Activated CD4-positive, alpha-beta T cell treated with anti-CD3 and anti-CD28 coated beads for 36 hours (primary cell): ENCODE measurements at regions of chr7 and their contacts with region 1.

Region 1: DNA sequence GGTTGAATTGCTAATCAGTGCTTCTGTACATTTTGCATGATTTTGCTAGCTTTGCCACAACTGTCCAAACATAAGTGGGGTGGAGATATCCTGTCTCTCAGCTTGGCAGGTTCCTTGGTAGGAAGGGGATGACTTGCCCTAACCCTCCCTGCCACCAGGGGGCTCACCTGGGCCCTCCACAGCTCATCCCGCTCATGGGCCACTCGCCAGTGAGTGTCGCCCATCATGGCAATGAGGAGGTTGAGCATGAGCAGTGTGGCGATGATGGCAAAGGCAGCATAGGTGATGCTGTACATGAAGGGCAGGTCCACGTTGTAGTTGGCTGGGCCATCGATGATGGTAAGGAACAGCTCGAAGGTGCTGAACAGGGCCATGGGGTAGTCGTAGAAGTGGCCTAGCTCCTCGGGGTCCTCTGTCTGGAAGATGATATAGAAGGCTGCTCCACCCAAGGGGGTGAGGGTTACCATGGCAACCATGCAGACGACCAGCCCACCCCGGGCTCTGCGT is 12.2 kb downstream of the TRPV6 start:
- DNase-seq: peak; percentile 68
- ATAC-seq: peak; percentile 77
- H3K4me3 Mint-ChIP-seq: no peak overlapping the region
- H3K27ac Mint-ChIP-seq: no peak overlapping the region
- H3K4me1 Mint-ChIP-seq: no peaks in the 10 kb centered on the region
- H3K27me3 Mint-ChIP-seq: no peaks in the 10 kb centered on the region

Region 2: GRCh38 chr7:142886477-142887265 is 13.3 kb after region 1 on chr7:
- CTCF ChIA-PET with region 1: interaction called, 15 read pairs
- POLR2A ChIA-PET with region 1: no interaction called
- intact Hi-C with region 1: loop called in 1 of 2 experiments (anchors 1 kb)
- DNase-seq: no peak
- ATAC-seq: no peak
- H3K4me3 Mint-ChIP-seq: no peak overlapping the region
- H3K27ac Mint-ChIP-seq: no peak overlapping the region
- H3K4me1 Mint-ChIP-seq: no peaks in the 10 kb centered on the region
- H3K27me3 Mint-ChIP-seq: peaks cover 4% of the 10 kb centered on the region

Region 3: DNA sequence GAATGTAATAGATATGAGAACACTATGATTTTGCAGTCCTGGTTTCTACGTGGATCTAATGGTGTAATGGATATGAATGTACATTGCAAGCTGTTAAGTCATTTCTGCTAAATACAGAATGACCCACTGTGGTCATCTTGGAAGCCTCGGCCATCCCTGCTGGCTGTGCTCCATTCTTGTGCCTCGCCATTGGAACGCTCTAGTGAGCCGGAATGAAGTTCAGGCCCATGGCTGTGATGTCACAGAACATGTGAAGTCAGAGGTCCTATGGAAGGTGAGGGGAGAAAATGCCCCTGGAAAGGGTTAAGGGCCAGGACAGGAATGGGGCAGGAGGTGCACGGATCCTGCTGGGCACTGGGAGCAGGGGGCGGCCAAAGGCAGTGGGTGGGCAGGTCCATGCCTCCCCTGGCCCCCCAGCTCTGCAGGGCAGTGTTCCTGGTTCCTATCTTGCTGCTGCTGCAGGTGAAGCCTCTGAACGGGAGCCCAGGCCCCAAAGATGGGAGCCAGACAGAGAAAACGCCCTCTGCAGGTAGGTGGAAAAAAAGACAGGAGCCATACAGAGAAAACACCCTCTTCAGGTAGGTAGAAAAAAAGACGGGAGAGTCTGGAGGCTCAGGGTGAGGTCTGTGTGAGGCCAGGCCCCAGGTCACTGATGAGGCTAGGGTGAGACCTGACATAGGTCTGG is 66.0 kb after region 1 on chr7 and contains the start of gene LLCFC1:
- CTCF ChIA-PET with region 1: no interaction called
- POLR2A ChIA-PET with region 1: no interaction called
- intact Hi-C with region 1: no loop called
- DNase-seq: peak; percentile 24
- ATAC-seq: peak; percentile 30
- H3K4me3 Mint-ChIP-seq: no peak within 1 kb of the TSS
- H3K27ac Mint-ChIP-seq: no peak within 1 kb of the TSS
- H3K4me1 Mint-ChIP-seq: no peaks in the 10 kb centered on the region
- H3K27me3 Mint-ChIP-seq: no peaks in the 10 kb centered on the region
- total RNA-seq, gene LLCFC1: not detected

Region 4: DNA sequence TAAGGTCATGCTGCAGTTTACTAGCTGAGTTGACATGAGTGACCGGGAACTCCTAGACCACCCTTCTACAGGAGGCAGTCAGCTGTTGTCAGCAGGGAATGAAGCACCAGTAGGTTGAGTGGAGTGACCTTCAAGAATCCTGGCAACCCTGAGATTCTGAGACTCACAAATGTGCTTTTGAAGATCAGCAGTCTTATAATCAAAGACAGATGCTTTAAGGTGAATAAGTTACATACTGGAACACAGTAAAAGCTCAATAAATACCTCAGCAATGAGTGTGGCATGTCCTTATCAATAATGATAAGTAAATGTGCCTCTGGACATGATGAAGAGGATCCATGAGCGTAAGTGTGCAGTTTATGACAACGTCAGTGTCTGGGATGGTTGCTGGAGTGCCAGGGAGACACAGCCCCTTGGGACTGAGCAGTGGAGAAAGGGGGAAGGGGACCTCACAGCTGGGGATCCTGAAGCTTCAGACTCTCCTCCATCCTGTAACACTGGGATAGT is 166.9 kb after region 1 on chr7:
- CTCF ChIA-PET with region 1: no interaction called
- POLR2A ChIA-PET with region 1: no interaction called
- intact Hi-C with region 1: no loop called
- DNase-seq: no peak
- ATAC-seq: no peak
- H3K4me3 Mint-ChIP-seq: no peak overlapping the region
- H3K27ac Mint-ChIP-seq: no peak overlapping the region
- H3K4me1 Mint-ChIP-seq: no peaks in the 10 kb centered on the region
- H3K27me3 Mint-ChIP-seq: peaks cover 11% of the 10 kb centered on the region